PC-3 (cell line): ENCODE measurements at regions of chr5 and their contacts with region 1.

Region 1: DNA sequence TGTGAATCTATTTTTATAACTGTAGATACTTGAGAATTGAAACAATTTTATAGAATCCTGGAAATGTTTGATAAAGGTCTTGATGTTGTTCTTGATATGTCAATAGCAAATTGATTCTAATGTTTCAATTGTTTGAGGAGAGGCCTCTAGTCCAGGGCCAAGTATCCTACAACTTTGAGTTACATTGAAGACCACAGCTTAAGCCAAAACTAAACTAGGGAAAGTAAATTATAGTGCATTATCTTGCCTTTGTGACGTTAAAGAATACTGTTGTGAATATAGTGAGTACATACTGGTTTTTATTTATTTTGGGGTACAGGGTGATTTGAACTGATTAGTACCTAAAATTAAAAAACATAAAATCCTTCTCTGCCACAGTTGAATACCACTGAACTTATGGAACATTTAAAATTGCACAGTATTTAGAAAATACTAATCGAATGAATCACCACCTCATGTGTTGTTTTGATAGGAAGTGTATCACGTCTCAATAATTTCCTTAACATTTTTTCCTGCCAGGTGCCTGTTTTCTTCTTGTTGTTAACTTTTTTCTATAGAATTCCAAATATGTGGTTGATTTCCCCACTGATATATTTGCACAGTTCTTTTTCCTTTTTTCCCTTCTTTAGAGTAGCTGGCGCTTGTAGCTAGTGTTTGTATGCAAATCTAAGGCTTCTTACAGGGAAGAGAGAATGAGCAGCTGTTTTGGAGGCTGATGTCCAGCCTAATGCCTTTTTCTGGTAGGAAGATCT is 12.5 kb downstream of the ARHGEF28 start:
- DNase-seq: peak; percentile 85
- ATAC-seq: peak; percentile 75
- H3K4me3 ChIP-seq: peak overlapping the region; percentile 49
- H3K27ac ChIP-seq: peak overlapping the region; percentile 67
- H3K4me1 ChIP-seq: peaks cover 39% of the 10 kb centered on the region
- H3K27me3 ChIP-seq: no peaks in the 10 kb centered on the region
- CTCF ChIP-seq: no peak

Region 2: DNA sequence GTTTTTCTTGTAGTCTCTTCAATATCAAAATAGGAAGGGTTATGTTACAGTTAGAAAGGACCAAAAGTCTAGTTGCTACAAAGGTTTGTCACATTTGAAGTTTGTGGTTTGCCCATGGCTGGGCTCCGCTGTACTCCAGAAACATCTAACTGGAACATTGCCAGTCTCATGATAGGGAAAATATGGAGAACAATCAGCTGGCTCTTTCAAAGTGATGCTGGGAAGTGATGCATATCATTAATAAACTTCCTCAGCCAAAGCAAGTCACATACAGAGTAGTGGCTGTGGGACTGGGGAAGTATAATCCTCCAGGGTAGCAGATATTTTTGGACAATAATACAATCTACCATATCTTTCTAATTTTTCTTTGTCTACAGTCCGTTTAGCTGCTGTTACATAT is 131.5 kb before region 1 on chr5:
- CTCF ChIA-PET with region 1: no interaction called
- POLR2A ChIA-PET with region 1: no interaction called
- intact Hi-C with region 1: no loop called
- DNase-seq: no peak
- ATAC-seq: no peak
- H3K4me3 ChIP-seq: no peak overlapping the region
- H3K27ac ChIP-seq: no peak overlapping the region
- H3K4me1 ChIP-seq: no peaks in the 10 kb centered on the region
- H3K27me3 ChIP-seq: no peaks in the 10 kb centered on the region
- CTCF ChIP-seq: no peak

Region 3: DNA sequence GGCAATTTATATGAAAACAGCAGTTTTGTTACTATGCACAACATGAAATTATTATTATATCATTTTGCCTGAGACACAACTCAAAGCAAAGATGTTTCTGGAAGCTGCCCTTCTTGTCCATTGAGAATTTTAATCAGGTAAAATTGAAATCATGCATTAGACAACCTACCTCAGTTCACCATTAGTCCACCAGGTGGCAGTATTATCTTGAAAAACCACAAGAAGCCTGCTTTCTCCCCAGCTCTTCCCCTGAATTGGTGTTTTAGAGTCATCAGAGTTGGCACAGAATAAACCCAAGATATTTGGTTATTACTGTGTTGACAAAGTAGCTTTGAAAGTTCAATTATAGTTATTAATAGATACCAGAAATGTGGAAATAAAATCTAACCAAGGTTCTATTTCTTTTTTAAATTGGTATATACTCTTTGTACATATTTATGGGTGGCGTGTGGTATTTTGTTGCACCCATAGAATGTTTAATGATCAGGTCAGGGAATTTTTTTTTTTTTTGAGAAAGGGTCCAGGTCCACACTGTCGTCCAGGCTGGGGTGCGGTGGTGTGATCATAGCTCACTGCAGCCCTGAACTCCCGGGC is 47.3 kb before region 1 on chr5:
- CTCF ChIA-PET with region 1: no interaction called
- POLR2A ChIA-PET with region 1: no interaction called
- intact Hi-C with region 1: loop called (anchors 5 kb)
- DNase-seq: peak; percentile 87
- ATAC-seq: peak; percentile 65
- H3K4me3 ChIP-seq: no peak overlapping the region
- H3K27ac ChIP-seq: no peak overlapping the region
- H3K4me1 ChIP-seq: peaks cover 24% of the 10 kb centered on the region
- H3K27me3 ChIP-seq: no peaks in the 10 kb centered on the region
- CTCF ChIP-seq: peak; percentile 84

Region 4: DNA sequence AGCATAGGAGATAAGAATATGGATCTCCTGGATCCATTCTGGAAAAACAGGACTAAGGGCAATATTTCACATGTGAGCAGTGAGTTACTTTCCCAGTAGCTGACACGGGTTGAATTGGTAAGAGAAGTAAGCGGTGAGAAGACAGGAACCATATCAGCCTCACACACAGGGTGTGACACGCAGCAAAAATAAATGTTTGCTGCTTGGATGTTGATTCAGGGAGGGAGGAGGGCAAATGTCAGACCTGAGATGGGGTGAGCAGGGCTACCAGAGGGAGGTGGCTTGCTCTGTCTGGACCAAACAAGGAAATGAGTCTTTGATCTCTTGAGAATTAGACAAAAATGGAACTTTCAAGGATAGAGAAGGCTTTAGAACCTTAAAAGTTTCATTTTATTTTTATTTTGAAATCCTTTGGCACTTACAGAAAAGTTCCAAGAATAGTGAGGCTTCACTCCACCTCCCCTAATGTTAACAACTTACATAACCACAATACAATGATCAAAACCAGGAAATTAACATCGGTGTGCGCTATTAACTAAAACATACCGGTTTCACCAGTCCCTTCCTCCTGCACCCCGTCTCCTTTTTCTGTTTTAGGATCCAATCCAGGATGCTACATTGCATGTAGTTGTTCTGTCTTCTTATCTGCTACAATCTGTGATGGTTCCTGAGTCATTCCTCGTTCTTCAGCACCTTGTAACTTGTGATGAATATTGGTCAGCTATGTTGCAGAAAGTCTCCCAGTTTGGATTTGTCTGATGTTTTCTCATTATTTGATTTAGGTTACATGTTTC is 33.1 kb before region 1 on chr5:
- CTCF ChIA-PET with region 1: no interaction called
- POLR2A ChIA-PET with region 1: no interaction called
- intact Hi-C with region 1: loop called (anchors 2 kb)
- DNase-seq: peak; percentile 72
- ATAC-seq: peak; percentile 88
- H3K4me3 ChIP-seq: peak overlapping the region; percentile 26; the same call in 1 of the 2 replicates
- H3K27ac ChIP-seq: peak overlapping the region; percentile 54
- H3K4me1 ChIP-seq: peaks cover 33% of the 10 kb centered on the region
- H3K27me3 ChIP-seq: no peaks in the 10 kb centered on the region
- CTCF ChIP-seq: no peak

Region 5: DNA sequence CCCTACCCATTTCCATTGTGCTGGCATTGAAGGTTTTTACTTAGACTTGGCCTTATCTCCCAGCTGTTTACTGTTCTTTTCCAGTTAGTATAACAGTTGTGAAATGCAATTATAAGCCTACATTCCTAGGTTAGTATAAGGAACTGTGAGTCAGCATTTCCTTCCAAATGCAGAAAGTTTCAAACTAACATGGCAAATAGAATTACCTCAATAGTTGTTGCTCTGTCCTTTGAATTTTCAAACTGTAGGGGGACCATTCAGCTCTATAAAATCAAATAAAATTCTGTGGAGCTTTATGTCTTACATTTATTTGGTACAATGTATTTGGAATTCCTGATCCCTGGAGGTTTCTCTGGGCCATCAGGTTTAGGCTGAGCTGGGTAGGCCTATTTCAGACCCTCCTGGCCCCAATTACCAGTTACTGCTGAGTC is 34.7 kb after region 1 on chr5:
- CTCF ChIA-PET with region 1: no interaction called
- POLR2A ChIA-PET with region 1: no interaction called
- intact Hi-C with region 1: loop called (anchors 5 kb)
- DNase-seq: peak; percentile 66
- ATAC-seq: peak; percentile 73
- H3K4me3 ChIP-seq: no peak overlapping the region
- H3K27ac ChIP-seq: peak overlapping the region; percentile 86
- H3K4me1 ChIP-seq: peaks cover 23% of the 10 kb centered on the region
- H3K27me3 ChIP-seq: no peaks in the 10 kb centered on the region
- CTCF ChIP-seq: no peak